Gastrocnemius medialis (tissue), 4 donors: ENCODE measurements at regions of chr3 and their contacts with region 1.

Region 1: GRCh38 chr3:142987080-142987700 is 14.2 kb upstream of the U2SURP start:
- DNase-seq: no peak
- ATAC-seq: peak; percentile 48 to 62
- H3K4me3 ChIP-seq: no peak overlapping the region
- H3K27ac ChIP-seq: peak overlapping the region; percentile 52 to 74 (median 66)
- H3K4me1 ChIP-seq: peaks cover 0 to 8% of the 10 kb centered on the region in 2 donors
- H3K27me3 ChIP-seq: no peaks in the 10 kb centered on the region
- CTCF ChIP-seq: peak; percentile 45 to 70 (median 69)
- POLR2A ChIP-seq: no peak

Region 2: GRCh38 chr3:142586803-142587406 is 400.3 kb before region 1 on chr3:
- in situ Hi-C with region 1: loop called in 3 of 4 experiments (anchors 10 to 25 kb)
- intact Hi-C with region 1: loop called (anchors 2 kb)
- DNase-seq: no peak
- ATAC-seq: peak in 1 of 2 donors; percentile 61
- H3K4me3 ChIP-seq: no peak overlapping the region
- H3K27ac ChIP-seq: no peak overlapping the region
- H3K4me1 ChIP-seq: no peaks in the 10 kb centered on the region
- H3K27me3 ChIP-seq: no peaks in the 10 kb centered on the region
- CTCF ChIP-seq: peak; percentile 23 to 58 (median 32)
- POLR2A ChIP-seq: no peak

Region 3: GRCh38 chr3:142802891-142803290 is 184.3 kb before region 1 on chr3:
- in situ Hi-C with region 1: no loop called
- intact Hi-C with region 1: no loop called
- DNase-seq: no peak
- ATAC-seq: no peak
- H3K4me3 ChIP-seq: no peak overlapping the region
- H3K27ac ChIP-seq: no peak overlapping the region
- H3K4me1 ChIP-seq: no peaks in the 10 kb centered on the region
- H3K27me3 ChIP-seq: no peaks in the 10 kb centered on the region
- CTCF ChIP-seq: no peak
- POLR2A ChIP-seq: no peak

Region 4: DNA sequence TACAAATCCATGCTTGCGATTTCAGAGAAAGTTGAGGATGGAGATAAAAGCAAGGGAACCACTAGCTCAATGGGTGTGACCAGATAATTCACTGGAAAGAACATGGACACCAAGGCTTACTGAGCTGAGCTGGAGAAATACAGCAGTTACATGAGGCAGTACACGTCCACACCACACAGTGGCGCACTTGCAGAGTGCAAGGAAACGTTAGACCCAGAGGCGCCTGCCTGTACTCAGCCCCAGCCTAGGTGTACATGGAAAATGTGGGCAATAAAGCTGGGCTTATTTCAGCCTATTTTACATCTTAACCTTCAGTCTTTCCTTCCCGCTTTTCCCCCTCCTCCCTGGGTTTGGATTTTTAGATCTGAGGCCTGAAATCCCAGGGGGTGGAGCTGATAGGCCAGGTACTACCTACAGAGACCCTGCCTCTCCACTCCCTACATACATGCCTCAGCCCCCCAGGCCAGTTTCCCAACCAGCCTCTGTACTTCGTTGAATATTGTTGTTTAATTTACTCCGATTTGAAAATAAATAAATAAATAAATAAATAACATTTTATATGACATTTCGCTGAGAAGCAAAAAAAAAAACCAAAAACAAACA is 158.4 kb before region 1 on chr3:
- in situ Hi-C with region 1: loop called in 3 of 4 experiments (anchors 5 to 10 kb)
- intact Hi-C with region 1: no loop called
- DNase-seq: peak; percentile 27 to 58
- ATAC-seq: peak; percentile 88
- H3K4me3 ChIP-seq: no peak overlapping the region
- H3K27ac ChIP-seq: no peak overlapping the region
- H3K4me1 ChIP-seq: no peaks in the 10 kb centered on the region
- H3K27me3 ChIP-seq: no peaks in the 10 kb centered on the region
- CTCF ChIP-seq: peak; percentile 36 to 73 (median 64)
- POLR2A ChIP-seq: no peak

Region 5: GRCh38 chr3:142929109-142929508 is 58.1 kb before region 1 on chr3:
- in situ Hi-C with region 1: loop called (anchors 5 to 10 kb)
- intact Hi-C with region 1: loop called (anchors 1 kb)
- DNase-seq: peak; percentile 24 to 58
- ATAC-seq: peak; percentile 81 to 87
- H3K4me3 ChIP-seq: no peak overlapping the region
- H3K27ac ChIP-seq: no peak overlapping the region
- H3K4me1 ChIP-seq: no peaks in the 10 kb centered on the region
- H3K27me3 ChIP-seq: no peaks in the 10 kb centered on the region
- CTCF ChIP-seq: peak; percentile 40 to 72 (median 63)
- POLR2A ChIP-seq: no peak

Region 6: GRCh38 chr3:142973217-142974009 is 13.8 kb before region 1 on chr3:
- in situ Hi-C with region 1: no loop called
- intact Hi-C with region 1: loop called (anchors 2 kb)
- DNase-seq: peak; percentile 85 to 94
- ATAC-seq: peak; percentile 94 to 95
- H3K4me3 ChIP-seq: no peak overlapping the region
- H3K27ac ChIP-seq: peak overlapping the region; percentile 30 to 75 (median 54)
- H3K4me1 ChIP-seq: peaks cover 11 to 22% of the 10 kb centered on the region in 2 donors
- H3K27me3 ChIP-seq: no peaks in the 10 kb centered on the region
- CTCF ChIP-seq: no peak
- POLR2A ChIP-seq: no peak

Region 7: GRCh38 chr3:143001369-143002082 is 14.3 kb after region 1 on chr3 and contains the start of gene U2SURP:
- in situ Hi-C with region 1: no loop called
- intact Hi-C with region 1: loop called (anchors 1 kb)
- DNase-seq: peak; percentile 95 to 96
- ATAC-seq: peak; percentile 92 to 94
- H3K4me3 ChIP-seq: peak within 1 kb of the TSS; percentile 65 to 95 (median 87)
- H3K27ac ChIP-seq: peak within 1 kb of the TSS; percentile 92 to 95 (median 94)
- H3K4me1 ChIP-seq: peaks cover 49 to 53% of the 10 kb centered on the region in 2 donors
- H3K27me3 ChIP-seq: no peaks in the 10 kb centered on the region
- CTCF ChIP-seq: peak in 1 of 5 experiments; percentile 26
- POLR2A ChIP-seq: peak; percentile 80 to 82
- total RNA-seq, gene U2SURP: 43.2 to 63.7 (median 43.9) TPM